Heart left ventricle (tissue), 16 donors: ENCODE measurements at regions of chr6 and their contacts with region 1.

Region 1: DNA sequence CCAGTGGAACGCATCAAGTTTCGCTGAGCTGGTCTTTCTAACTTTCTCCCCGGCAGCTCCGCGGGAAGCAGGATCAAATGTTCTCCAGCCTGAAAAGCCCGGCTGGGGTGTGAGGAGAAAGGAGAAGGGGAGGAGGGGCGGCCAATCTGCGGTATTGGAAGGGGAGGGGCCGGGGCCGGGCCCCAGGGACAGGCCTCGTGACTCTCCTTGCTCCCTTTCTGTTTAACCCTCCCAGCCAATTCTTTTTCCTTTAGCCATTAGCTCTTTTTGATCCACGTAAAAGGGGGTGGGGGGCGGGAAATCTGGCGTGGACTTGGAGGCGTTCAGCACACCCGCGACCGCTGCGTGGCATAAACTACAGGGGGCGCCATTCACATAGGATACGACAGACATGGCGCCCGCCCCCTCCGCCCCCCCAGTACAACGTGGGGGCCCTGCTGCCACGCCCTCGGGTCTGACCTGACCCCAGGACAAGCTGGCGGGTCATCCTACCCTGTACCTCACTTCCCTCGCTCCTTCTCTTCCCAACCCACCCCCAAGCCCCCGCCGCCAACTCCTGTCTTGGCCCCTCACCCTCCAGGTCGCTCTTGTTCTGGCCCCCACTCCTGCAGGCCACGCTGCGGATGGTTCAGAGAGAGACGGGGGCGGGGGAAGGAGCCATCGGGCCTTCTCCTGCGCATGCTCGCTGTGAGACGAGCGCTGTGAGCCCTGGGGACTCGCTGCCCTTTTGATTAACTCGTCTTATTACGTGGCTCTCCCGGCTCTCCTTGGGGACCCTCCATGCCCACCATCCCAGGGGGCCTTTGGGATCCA is 7.8 kb upstream of the MDGA1 start:
- DNase-seq: peak; percentile 81 to 88 (median 86)
- ATAC-seq: peak; percentile 87 to 94 (median 92)
- H3K4me3 ChIP-seq: peak overlapping the region; percentile 37 to 68 (median 56)
- H3K27ac ChIP-seq: peak overlapping the region; percentile 64 to 83 (median 77)
- H3K4me1 ChIP-seq: peaks cover 0 to 17% (median 7%) of the 10 kb centered on the region in 12 donors
- H3K27me3 ChIP-seq: no peaks in the 10 kb centered on the region
- CTCF ChIP-seq: peak; percentile 54 to 83 (median 74)
- POLR2A ChIP-seq: no peak

Region 2: DNA sequence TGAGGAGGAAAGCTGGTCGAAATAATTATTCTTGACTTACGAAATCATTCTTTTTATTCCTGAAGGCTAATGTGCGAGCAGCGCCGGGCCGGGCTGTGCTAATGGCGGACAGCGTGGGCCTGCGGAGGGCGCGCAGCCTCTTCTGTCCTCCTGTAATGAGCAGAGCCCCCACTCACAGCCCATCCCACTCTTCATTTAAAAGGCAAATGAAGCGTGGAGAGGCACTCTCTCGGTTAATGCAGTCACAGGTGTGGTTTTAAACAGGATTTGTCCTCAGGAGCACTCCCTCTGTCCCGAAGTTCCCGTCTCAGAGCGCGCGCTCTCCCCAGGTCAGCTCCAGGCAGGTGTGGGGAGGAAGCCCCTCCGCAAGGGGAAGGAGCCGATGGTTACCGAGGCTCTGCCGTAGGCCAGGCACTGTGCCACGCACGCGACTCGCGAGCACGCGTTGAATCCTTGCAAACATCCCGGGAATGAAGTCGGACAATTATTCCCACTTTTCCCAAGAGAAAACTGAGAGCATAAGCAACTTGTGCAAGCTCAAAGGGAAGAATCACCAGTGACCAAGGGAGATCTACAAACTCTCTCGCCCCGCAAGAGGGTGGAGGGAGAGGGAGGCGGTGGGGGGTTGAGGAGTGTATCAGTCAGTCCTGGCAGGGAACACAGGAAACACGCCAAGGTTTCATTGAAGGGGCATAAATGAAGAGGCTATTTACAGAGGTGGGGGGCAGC is 78.6 kb after region 1 on chr6:
- intact Hi-C with region 1: loop called in 1 of 10 experiments (anchors 10 kb)
- DNase-seq: no peak
- ATAC-seq: peak; percentile 52 to 78 (median 68)
- H3K4me3 ChIP-seq: peak overlapping the region; percentile 26 to 66 (median 52)
- H3K27ac ChIP-seq: peak overlapping the region in 2 of 12 donors; percentile 15 to 51
- H3K4me1 ChIP-seq: peaks cover 0 to 24% (median 12%) of the 10 kb centered on the region in 12 donors
- H3K27me3 ChIP-seq: peaks cover 0 to 19% (median 0%) of the 10 kb centered on the region in 9 donors
- CTCF ChIP-seq: peak in 5 of 12 donors; percentile 7 to 33 (median 12)
- POLR2A ChIP-seq: no peak

Region 3: DNA sequence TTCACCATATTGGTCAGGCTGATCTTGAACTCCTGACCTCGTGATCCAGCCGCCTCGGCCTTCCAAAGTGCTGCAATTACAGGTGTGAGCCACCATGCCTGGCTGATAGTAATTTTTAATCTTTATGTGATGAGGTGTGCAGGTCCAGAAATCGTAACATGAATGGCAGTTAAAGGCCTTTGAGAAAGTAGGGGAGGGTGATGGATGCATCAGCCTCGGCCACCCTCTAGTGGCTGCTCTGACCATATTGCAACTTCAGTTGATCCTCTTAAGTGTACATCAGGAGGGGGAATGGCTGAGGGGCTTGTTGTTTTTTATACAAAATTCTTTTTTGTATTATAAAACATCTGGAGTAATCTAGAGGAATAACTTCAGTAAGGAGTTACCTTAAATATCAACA is 307.1 kb after region 1 on chr6:
- intact Hi-C with region 1: loop called (anchors 5 to 10 kb)
- DNase-seq: peak in 3 of 5 donors; percentile 11 to 31 (median 21)
- ATAC-seq: peak in 3 of 4 donors; percentile 44 to 82 (median 79)
- H3K4me3 ChIP-seq: no peak overlapping the region
- H3K27ac ChIP-seq: no peak overlapping the region
- H3K4me1 ChIP-seq: peaks cover 0 to 25% (median 12%) of the 10 kb centered on the region in 12 donors
- H3K27me3 ChIP-seq: no peaks in the 10 kb centered on the region
- CTCF ChIP-seq: peak; percentile 45 to 76 (median 66)
- POLR2A ChIP-seq: no peak